ENCODE measurements at regions of chr12 and their contacts with region 1.

Region 1: DNA sequence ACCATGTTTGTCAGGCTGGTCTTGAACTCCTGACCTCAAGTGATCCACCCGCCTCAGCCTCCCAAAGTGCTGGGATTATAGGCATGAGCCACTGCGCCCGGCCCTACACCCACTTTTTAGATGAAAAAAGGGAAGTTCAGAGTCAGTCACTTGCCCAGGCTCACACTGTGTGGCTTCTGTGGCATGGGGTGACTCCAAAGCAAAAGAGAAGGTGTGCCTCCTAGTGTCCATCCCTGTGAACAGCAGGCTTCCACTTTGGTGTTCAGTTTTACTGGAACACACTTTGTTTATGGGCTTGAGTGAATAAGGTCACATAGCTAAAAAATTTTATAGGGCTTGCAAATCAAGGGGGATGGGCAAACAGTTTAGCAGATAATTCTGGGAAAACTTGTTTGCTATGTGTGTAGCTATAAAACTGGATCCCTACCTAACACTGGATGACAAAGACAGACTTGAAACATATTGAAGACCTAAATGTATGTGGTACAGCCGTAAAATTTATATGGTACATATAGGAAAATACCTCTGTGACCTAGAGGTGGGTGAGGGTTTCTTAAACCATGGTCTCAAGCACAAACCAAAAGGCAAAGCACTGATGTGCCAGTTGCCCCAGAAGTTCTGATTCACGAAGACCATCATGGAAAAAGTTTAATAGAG is 54.9 kb downstream of the EID3 start:
- DNase-seq: peak; percentile 77
- ATAC-seq: peak; percentile 80

Region 2: GRCh38 chr12:104201238-104202001 is 157.1 kb before region 1 on chr12:
- intact Hi-C with region 1: loop called (anchors 5 kb)
- DNase-seq: no peak
- ATAC-seq: peak; percentile 76

Region 3: DNA sequence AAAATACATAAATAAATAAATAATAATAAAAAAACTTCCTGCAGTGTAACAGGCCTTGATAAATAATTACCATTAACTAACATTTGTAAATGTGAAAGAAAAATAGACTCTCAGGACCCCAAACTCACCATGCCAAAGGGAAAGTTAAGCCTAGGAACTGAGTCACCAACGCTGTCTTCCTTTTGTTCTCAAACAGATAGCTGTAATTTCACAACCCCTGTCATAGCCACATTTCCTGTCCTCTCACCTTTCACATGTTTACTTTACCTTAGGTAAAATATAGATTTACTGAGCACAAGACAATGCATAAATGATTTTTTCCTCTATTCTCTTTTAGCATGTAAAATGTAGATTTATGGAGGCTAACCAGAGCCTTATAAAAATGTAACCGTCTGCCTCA is 62.4 kb after region 1 on chr12:
- intact Hi-C with region 1: no loop called
- DNase-seq: no peak
- ATAC-seq: no peak

Measured in sciatic nerve (tissue), 2 donors.